Heart right ventricle (tissue), 16 donors: ENCODE measurements at regions of chr5 and their contacts with region 1.

Region 1: GRCh38 chr5:58366461-58366860 is 93.4 kb downstream of the PLK2 start:
- DNase-seq: peak in 1 of 2 donors; percentile 10
- ATAC-seq: peak; percentile 47 to 98 (median 87)
- H3K4me3 ChIP-seq: no peak overlapping the region
- H3K27ac ChIP-seq: peak overlapping the region in 7 of 10 donors; percentile 34 to 75 (median 53)
- H3K4me1 ChIP-seq: peaks cover 0 to 16% (median 0%) of the 10 kb centered on the region in 9 donors
- H3K27me3 ChIP-seq: no peaks in the 10 kb centered on the region
- CTCF ChIP-seq: no peak

Region 2: GRCh38 chr5:58191451-58191850 is 175.0 kb before region 1 on chr5:
- intact Hi-C with region 1: no loop called
- DNase-seq: no peak
- ATAC-seq: no peak
- H3K4me3 ChIP-seq: no peak overlapping the region
- H3K27ac ChIP-seq: no peak overlapping the region
- H3K4me1 ChIP-seq: peaks cover 0 to 23% (median 11%) of the 10 kb centered on the region in 9 donors
- H3K27me3 ChIP-seq: no peaks in the 10 kb centered on the region
- CTCF ChIP-seq: no peak

Region 3: GRCh38 chr5:58346014-58346413 is 20.4 kb before region 1 on chr5:
- intact Hi-C with region 1: no loop called
- DNase-seq: no peak
- ATAC-seq: no peak
- H3K4me3 ChIP-seq: no peak overlapping the region
- H3K27ac ChIP-seq: no peak overlapping the region
- H3K4me1 ChIP-seq: no peaks in the 10 kb centered on the region
- H3K27me3 ChIP-seq: no peaks in the 10 kb centered on the region
- CTCF ChIP-seq: no peak

Region 4: DNA sequence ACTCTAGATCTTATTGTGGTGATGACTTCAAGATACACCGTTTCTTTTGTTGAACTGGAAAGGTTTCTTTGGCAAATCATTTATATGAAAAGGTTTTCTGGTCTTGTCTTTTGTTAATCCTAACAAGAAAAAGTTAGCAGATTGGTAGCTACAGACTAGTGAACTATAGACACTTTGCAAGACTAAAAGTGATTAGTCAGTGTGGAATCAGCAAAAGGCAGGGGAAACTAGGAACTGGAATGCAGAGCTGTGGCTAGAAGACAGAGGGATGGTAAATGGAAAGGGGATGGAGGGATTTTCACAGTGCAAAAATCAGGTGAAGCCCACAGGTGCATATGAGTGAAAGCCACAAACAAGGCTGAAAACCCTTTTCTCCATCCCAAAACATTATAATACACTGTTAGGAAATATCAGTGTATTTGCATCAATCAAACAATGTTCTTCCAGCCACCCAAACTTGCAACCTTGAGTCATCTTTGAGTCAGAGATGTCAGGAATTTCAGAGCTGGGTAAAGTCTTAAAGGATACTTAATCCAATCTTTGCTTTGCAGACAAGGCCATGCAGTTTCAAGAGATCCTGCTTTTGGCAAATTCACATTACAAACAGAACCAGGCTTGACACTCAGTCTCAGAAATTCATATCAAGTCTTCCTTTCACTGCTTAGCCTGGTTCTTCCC is 40.7 kb after region 1 on chr5:
- intact Hi-C with region 1: loop called in 2 of 10 experiments (anchors 2 kb)
- DNase-seq: no peak
- ATAC-seq: no peak
- H3K4me3 ChIP-seq: no peak overlapping the region
- H3K27ac ChIP-seq: no peak overlapping the region
- H3K4me1 ChIP-seq: peaks cover 0 to 17% (median 4%) of the 10 kb centered on the region in 9 donors
- H3K27me3 ChIP-seq: no peaks in the 10 kb centered on the region
- CTCF ChIP-seq: no peak

Region 5: DNA sequence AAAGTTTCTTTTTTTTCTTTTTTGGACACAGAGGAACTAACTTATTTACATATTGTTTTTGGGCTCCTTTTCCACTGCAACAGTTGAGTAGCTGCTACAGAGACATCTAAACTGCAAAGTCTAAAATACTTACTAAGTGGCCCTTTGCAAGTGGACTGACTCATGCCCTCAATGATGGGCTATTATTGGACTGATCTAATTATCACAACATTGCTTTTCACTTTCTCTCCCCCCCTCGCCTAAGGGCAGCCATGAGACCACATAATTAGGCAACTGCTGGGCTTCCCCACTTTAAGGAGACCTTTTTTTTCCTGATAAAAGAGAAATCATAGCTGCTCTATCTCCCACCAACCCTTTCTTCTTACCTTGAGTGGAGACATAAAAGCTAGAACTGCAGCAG is 46.5 kb after region 1 on chr5:
- intact Hi-C with region 1: loop called in 1 of 10 experiments (anchors 2 kb)
- DNase-seq: no peak
- ATAC-seq: peak in 3 of 8 donors; percentile 31 to 60 (median 50)
- H3K4me3 ChIP-seq: no peak overlapping the region
- H3K27ac ChIP-seq: no peak overlapping the region
- H3K4me1 ChIP-seq: peaks cover 0 to 24% (median 5%) of the 10 kb centered on the region in 9 donors
- H3K27me3 ChIP-seq: no peaks in the 10 kb centered on the region
- CTCF ChIP-seq: no peak

Region 6: GRCh38 chr5:58439094-58439644 is 72.7 kb after region 1 on chr5:
- intact Hi-C with region 1: no loop called
- DNase-seq: no peak
- ATAC-seq: peak in 1 of 8 donors; percentile 44
- H3K4me3 ChIP-seq: no peak overlapping the region
- H3K27ac ChIP-seq: no peak overlapping the region
- H3K4me1 ChIP-seq: peaks cover 0 to 7% (median 0%) of the 10 kb centered on the region in 9 donors
- H3K27me3 ChIP-seq: no peaks in the 10 kb centered on the region
- CTCF ChIP-seq: no peak